Activated CD4-positive, alpha-beta T cell treated with anti-CD3 and anti-CD28 coated beads for 36 hours (primary cell): ENCODE measurements at regions of chr16 and their contacts with region 1.

Region 1: DNA sequence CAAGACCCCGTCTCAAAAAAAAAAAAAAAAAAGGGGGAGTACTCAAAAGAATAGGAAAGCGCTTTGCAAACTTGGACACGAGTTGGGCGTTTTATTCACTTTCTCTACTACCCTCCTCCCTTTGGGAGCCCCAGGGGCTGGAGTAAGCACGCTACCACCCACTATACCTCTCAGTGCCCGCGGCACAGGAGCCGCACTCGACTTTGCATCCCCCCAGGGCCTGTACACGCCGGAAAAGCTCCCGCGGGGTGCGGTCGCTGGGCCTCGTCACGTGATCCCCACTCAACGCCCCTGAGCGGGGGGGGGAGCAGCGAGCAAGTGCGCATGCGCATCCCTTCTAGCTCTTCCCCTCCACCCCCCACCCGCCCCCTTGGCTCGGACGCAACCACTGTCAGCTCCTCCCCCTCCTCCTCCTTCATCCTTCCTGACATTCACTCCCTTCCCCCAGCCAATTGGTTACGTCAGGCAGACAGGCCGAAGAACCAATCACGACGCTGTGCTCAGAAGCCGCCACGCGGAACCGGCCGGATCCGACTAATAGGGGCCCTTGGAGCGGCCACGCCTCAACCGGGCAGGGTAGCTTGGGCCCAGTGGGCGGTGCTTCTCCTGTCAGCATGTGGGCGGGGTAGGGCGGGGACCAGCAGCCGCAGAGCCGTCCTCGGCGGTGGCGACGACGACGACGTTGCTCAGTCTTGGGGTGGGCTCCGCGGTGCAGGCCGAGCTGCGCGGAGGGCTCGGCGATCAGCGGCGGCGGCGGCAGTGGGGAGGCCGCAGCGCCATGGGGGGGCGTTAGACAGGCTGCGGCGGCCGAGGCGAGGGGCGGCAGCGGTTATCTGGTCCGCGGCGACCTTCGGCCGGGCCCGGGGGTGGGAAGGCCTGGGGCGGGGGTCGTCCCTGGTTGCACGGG is at the start of gene HAPSTR1:
- DNase-seq: peak; percentile 100
- ATAC-seq: peak; percentile 94
- H3K4me3 Mint-ChIP-seq: peak within 1 kb of the TSS; percentile 89
- H3K27ac Mint-ChIP-seq: peak within 1 kb of the TSS; percentile 95
- H3K4me1 Mint-ChIP-seq: peaks cover 25% of the 10 kb centered on the region
- H3K27me3 Mint-ChIP-seq: no peaks in the 10 kb centered on the region
- total RNA-seq, gene HAPSTR1: 42.4 to 51.4 TPM

Region 2: DNA sequence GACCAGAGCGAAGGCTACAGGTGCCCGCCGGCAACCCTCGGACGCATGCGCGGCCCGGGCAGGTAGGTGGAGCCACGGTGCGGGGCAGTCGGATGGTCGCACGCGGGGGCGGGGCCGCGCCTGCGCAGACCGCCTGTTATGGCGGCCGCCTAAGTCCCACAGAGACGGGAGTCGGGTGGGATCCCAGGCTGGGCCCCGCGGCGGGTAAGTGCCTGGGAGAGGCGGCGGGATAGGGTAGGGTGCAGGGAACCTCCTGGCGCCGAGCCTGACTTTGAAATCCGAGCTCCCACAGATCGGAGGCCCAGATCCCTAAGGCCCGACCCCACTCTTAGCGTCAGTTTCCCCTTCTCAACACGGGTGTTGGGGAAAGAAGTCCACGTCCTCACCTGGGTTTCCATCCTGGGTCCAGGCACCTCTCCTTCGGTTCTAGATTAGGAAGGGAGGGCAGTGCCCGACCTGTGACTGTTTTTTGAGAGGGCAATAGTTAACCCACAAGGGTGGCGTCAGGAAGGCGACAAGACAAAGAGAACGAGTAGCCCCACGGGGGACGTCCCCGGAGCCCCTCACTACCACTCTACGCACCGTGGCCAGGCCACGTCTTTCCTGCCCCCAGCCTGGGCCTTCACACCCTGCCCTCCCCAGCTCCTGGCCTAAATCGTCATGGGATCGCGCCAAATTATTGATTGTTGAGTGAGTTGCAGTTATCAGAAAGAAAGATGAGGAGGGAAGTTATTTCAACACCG is 469.5 kb before region 1 on chr16 and contains the start of gene METTL22:
- CTCF ChIA-PET with region 1: no interaction called
- POLR2A ChIA-PET with region 1: no interaction called
- intact Hi-C with region 1: loop called in 1 of 2 experiments (anchors 5 kb)
- DNase-seq: peak; percentile 96
- ATAC-seq: peak; percentile 98
- H3K4me3 Mint-ChIP-seq: peak within 1 kb of the TSS; percentile 91
- H3K27ac Mint-ChIP-seq: peak within 1 kb of the TSS; percentile 87
- H3K4me1 Mint-ChIP-seq: peaks cover 28% of the 10 kb centered on the region
- H3K27me3 Mint-ChIP-seq: peaks cover 3% of the 10 kb centered on the region
- total RNA-seq, gene METTL22: 32.3 to 45.8 TPM

Region 3: DNA sequence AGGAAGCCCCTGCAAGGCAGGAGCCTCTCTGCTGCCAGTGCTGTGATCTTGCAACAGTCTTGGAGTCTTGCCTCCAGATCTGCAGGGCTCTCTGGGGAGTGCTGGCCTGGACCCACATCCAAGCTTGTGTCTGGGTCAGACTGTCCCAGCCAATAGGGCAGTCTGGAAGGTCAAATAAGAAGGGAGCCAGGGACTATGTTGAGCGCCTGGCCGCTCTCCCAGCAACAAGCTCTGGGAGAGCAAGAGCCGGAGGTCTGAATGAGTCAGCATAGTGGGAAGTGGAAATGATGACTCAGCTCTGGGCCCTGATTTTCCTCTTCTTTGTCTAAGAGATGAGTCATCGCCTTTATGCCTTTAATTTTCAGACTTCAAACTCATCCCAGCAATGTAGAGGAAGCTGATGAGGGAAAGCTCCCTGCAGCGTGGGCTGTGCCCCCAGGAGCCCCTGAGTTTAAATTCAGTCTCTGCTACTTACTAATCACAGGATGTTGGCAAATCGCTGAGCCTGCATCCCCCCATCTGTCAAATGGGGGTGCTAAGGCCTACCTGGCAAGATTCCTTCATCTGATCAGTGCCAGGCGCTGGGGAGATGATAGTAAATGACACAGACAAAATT is 43.4 kb before region 1 on chr16:
- CTCF ChIA-PET with region 1: interaction called, 3 read pairs
- POLR2A ChIA-PET with region 1: interaction called, 7 read pairs
- intact Hi-C with region 1: loop called (anchors 2 to 5 kb)
- DNase-seq: peak; percentile 84
- ATAC-seq: peak; percentile 75
- H3K4me3 Mint-ChIP-seq: peak overlapping the region; percentile 41
- H3K27ac Mint-ChIP-seq: peak overlapping the region; percentile 74
- H3K4me1 Mint-ChIP-seq: peaks cover 43% of the 10 kb centered on the region
- H3K27me3 Mint-ChIP-seq: peaks cover 5% of the 10 kb centered on the region

Region 4: DNA sequence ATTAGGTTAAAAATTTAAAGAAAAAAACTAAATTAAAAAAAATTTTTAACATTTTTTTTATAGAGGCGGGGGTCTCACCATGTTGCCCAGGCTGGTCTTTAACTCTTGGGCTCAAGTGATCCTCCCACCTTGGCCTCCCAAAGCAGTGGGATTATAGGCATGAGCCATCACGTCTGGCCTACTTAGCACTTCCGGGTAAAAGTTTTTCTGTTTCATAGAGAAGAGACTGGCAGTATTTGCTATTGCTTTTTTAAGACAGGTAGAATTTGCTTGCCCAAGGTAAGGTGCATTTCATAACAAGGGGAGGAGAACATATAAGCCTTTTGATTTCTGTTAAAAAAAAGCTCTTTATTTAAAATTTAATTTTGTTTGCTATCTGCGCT is 11.8 kb before region 1 on chr16:
- CTCF ChIA-PET with region 1: interaction called, 7 read pairs
- POLR2A ChIA-PET with region 1: interaction called, 31 read pairs
- intact Hi-C with region 1: loop called (anchors 1 kb)
- DNase-seq: no peak
- ATAC-seq: no peak
- H3K4me3 Mint-ChIP-seq: no peak overlapping the region
- H3K27ac Mint-ChIP-seq: peak overlapping the region; percentile 89
- H3K4me1 Mint-ChIP-seq: peaks cover 32% of the 10 kb centered on the region
- H3K27me3 Mint-ChIP-seq: no peaks in the 10 kb centered on the region

Region 5: DNA sequence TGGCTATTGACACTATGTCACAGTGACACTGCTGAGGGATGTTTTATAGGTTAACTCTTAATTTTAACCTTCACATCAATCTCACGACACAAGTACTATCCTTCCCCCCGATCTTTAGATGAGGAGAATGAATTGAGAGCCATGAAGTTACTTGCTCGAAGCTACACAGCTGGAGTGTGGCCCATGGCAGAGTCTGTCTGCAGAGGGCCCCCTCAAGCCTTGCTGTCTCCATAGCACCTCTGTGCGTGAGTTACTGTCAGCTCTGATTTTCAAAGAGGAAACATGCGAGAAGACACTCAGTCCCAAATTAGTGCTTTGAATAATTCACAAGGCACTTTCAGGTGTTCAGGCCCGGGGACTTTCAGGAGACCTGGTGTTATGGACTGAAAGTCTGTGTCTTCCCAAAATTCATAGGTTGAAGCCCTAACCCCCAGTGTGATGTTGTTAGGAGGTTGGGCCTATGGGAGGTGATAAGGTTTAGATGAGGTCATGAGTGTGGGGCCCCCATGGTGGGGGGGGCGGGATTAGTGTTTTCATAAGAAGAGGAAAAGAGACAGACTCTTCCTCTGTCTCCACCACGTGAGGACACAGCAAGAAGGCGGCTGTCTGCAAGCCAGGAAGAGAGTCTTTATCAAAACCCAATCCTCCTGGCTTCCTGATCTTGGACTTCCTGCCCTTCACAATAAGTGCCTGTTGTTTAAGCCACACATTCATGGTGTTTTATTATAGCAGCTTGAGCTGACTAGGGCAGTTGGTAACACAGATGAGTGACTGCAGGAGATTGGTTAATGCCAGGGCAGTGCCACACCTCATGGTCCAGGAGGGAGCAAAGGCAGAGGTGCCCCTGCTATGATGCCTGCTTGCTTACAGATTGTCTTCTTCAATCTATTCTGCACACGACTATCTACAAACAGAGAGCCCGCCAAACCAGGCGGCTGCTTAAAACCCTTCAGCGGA is 282.0 kb after region 1 on chr16:
- CTCF ChIA-PET with region 1: no interaction called
- POLR2A ChIA-PET with region 1: no interaction called
- intact Hi-C with region 1: no loop called
- DNase-seq: no peak
- ATAC-seq: no peak
- H3K4me3 Mint-ChIP-seq: no peak overlapping the region
- H3K27ac Mint-ChIP-seq: no peak overlapping the region
- H3K4me1 Mint-ChIP-seq: no peaks in the 10 kb centered on the region
- H3K27me3 Mint-ChIP-seq: peaks cover 3% of the 10 kb centered on the region

Region 6: DNA sequence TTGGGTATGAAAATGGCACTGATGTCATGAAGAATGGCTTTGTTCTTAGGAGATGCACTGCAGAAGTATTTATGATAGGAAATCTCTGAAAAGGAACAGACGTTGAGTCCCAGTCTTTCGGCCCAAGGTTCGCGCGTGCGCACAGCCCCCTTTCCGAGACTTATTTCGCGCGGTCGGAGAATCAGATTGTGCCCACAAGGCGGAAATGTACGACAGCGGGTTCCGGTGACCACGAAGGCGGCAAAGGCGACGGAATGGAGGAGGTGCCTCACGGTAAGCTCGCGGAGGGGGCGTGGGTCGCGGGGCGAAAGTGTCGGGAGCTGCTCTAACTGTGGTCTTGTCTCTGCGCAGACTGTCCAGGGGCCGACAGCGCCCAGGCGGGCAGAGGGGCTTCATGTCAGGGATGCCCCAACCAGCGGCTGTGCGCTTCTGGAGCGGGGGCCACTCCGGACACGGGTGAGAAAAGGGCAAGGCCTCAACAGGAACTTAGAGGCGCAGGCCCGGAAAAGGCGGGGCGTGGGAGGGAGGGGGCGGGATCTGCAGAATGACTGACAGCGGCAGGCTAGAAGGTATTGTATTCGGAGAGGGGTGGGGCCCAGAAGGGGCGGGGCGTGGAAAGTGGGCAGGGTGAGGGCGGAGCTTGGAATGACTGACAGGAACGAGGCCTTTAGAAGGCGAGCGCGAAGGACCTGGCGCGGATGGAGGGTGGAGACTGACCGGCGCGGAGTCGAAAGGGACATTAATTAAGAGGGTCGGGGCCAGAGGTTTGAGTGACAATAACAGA is 1652.6 kb after region 1 on chr16 and contains the start of gene NUBP1:
- CTCF ChIA-PET with region 1: no interaction called
- POLR2A ChIA-PET with region 1: no interaction called
- intact Hi-C with region 1: loop called in 1 of 2 experiments (anchors 1 kb)
- DNase-seq: peak; percentile 100
- ATAC-seq: peak; percentile 95
- H3K4me3 Mint-ChIP-seq: peak within 1 kb of the TSS; percentile 75
- H3K27ac Mint-ChIP-seq: peak within 1 kb of the TSS; percentile 98
- H3K4me1 Mint-ChIP-seq: peaks cover 30% of the 10 kb centered on the region
- H3K27me3 Mint-ChIP-seq: no peaks in the 10 kb centered on the region
- total RNA-seq, gene NUBP1: 25.9 to 33.1 TPM